GM12878 (cell line): ENCODE measurements at regions of chr19 and their contacts with region 1.

Region 1: GRCh38 chr19:46753420-46754155 is 7.3 kb upstream of the STRN4 start:
- DNase-seq: no peak
- ATAC-seq: peak; percentile 87
- H3K4me3 ChIP-seq: no peak overlapping the region
- H3K27ac ChIP-seq: no peak overlapping the region
- H3K4me1 ChIP-seq: no peaks in the 10 kb centered on the region
- H3K27me3 ChIP-seq: no peaks in the 10 kb centered on the region
- CTCF ChIP-seq: peak; percentile 73 to 76 (median 75)
- EP300 ChIP-seq: no peak
- POLR2A ChIP-seq: no peak
- RAD21 ChIP-seq: peak; percentile 58

Region 2: GRCh38 chr19:46503848-46504453 is 249.6 kb before region 1 on chr19:
- CTCF ChIA-PET with region 1: no interaction called
- POLR2A ChIA-PET with region 1: no interaction called
- RAD21 ChIA-PET with region 1: no interaction called
- SMC1A ChIA-PET with region 1: no interaction called
- in situ Hi-C with region 1: no loop called
- intact Hi-C with region 1: no loop called
- DNase-seq: no peak
- ATAC-seq: no peak
- H3K4me3 ChIP-seq: no peak overlapping the region
- H3K27ac ChIP-seq: no peak overlapping the region
- H3K4me1 ChIP-seq: no peaks in the 10 kb centered on the region; the same call in 1 of the 2 replicates
- H3K27me3 ChIP-seq: no peaks in the 10 kb centered on the region
- CTCF ChIP-seq: no peak
- EP300 ChIP-seq: no peak
- POLR2A ChIP-seq: no peak
- RAD21 ChIP-seq: no peak

Region 3: GRCh38 chr19:46529622-46530462 is 223.7 kb before region 1 on chr19:
- CTCF ChIA-PET with region 1: interaction called, 21 read pairs
- POLR2A ChIA-PET with region 1: no interaction called
- RAD21 ChIA-PET with region 1: interaction called, 6 read pairs
- SMC1A ChIA-PET with region 1: interaction called, 6 read pairs
- in situ Hi-C with region 1: no loop called
- intact Hi-C with region 1: loop called (anchors 5 kb)
- DNase-seq: no peak
- ATAC-seq: peak; percentile 86
- H3K4me3 ChIP-seq: no peak overlapping the region
- H3K27ac ChIP-seq: no peak overlapping the region
- H3K4me1 ChIP-seq: peaks cover 4% of the 10 kb centered on the region
- H3K27me3 ChIP-seq: no peaks in the 10 kb centered on the region; a peak in 1 of 4 replicates
- CTCF ChIP-seq: peak; percentile 87 to 94 (median 90)
- EP300 ChIP-seq: no peak
- POLR2A ChIP-seq: no peak
- RAD21 ChIP-seq: peak; percentile 94

Region 4: GRCh38 chr19:46766569-46767317 is 13.2 kb after region 1 on chr19:
- CTCF ChIA-PET with region 1: interaction called, 27 read pairs
- POLR2A ChIA-PET with region 1: interaction called, 8 read pairs
- RAD21 ChIA-PET with region 1: interaction called, 4 read pairs
- SMC1A ChIA-PET with region 1: interaction called, 10 read pairs
- in situ Hi-C with region 1: no loop called
- intact Hi-C with region 1: no loop called
- DNase-seq: no peak
- ATAC-seq: peak; percentile 99
- H3K4me3 ChIP-seq: no peak overlapping the region
- H3K27ac ChIP-seq: no peak overlapping the region
- H3K4me1 ChIP-seq: no peaks in the 10 kb centered on the region
- H3K27me3 ChIP-seq: no peaks in the 10 kb centered on the region
- CTCF ChIP-seq: peak; percentile 70 to 89 (median 86)
- EP300 ChIP-seq: no peak
- POLR2A ChIP-seq: no peak
- RAD21 ChIP-seq: peak; percentile 38; the same call in 1 of the 2 replicates

Region 5: GRCh38 chr19:46788262-46788967 is 34.8 kb after region 1 on chr19 and contains the start of gene SLC1A5:
- CTCF ChIA-PET with region 1: interaction called, 21 read pairs
- POLR2A ChIA-PET with region 1: interaction called, 3 read pairs
- RAD21 ChIA-PET with region 1: no interaction called
- SMC1A ChIA-PET with region 1: interaction called, 6 read pairs
- in situ Hi-C with region 1: no loop called
- intact Hi-C with region 1: no loop called
- DNase-seq: peak; percentile 86
- ATAC-seq: peak; percentile 81
- H3K4me3 ChIP-seq: peak within 1 kb of the TSS; percentile 100
- H3K27ac ChIP-seq: peak within 1 kb of the TSS; percentile 94
- H3K4me1 ChIP-seq: 0 out of 2 replicates have a peak, but pooled peaks cover 7% of the 10 kb centered on the region
- H3K27me3 ChIP-seq: no peaks in the 10 kb centered on the region; a peak in 1 of 4 replicates
- CTCF ChIP-seq: no peak
- EP300 ChIP-seq: no peak
- POLR2A ChIP-seq: peak; percentile 100
- RAD21 ChIP-seq: no peak
- polyA plus RNA-seq, gene SLC1A5: 9.1 to 16.3 TPM

Region 6: GRCh38 chr19:46821498-46822409 is 68.2 kb after region 1 on chr19:
- CTCF ChIA-PET with region 1: interaction called, 10 read pairs
- POLR2A ChIA-PET with region 1: no interaction called
- RAD21 ChIA-PET with region 1: interaction called, 14 read pairs
- SMC1A ChIA-PET with region 1: interaction called, 8 read pairs
- in situ Hi-C with region 1: no loop called
- intact Hi-C with region 1: no loop called
- DNase-seq: no peak
- ATAC-seq: peak; percentile 81
- H3K4me3 ChIP-seq: peak overlapping the region; percentile 33; the same call in 1 of the 2 replicates
- H3K27ac ChIP-seq: peak overlapping the region; percentile 51
- H3K4me1 ChIP-seq: peaks cover 27% of the 10 kb centered on the region
- H3K27me3 ChIP-seq: no peaks in the 10 kb centered on the region
- CTCF ChIP-seq: no peak
- EP300 ChIP-seq: no peak
- POLR2A ChIP-seq: peak; percentile 55
- RAD21 ChIP-seq: no peak

Region 7: GRCh38 chr19:46834121-46834520 is 80.5 kb after region 1 on chr19:
- CTCF ChIA-PET with region 1: interaction called, 134 read pairs
- POLR2A ChIA-PET with region 1: no interaction called
- RAD21 ChIA-PET with region 1: interaction called, 6 read pairs
- SMC1A ChIA-PET with region 1: interaction called, 3 read pairs
- in situ Hi-C with region 1: no loop called
- intact Hi-C with region 1: no loop called
- DNase-seq: no peak
- ATAC-seq: no peak
- H3K4me3 ChIP-seq: no peak overlapping the region
- H3K27ac ChIP-seq: no peak overlapping the region
- H3K4me1 ChIP-seq: no peaks in the 10 kb centered on the region
- H3K27me3 ChIP-seq: no peaks in the 10 kb centered on the region
- CTCF ChIP-seq: no peak
- EP300 ChIP-seq: no peak
- POLR2A ChIP-seq: no peak
- RAD21 ChIP-seq: no peak

Region 8: GRCh38 chr19:46990991-46991676 is 237.5 kb after region 1 on chr19:
- CTCF ChIA-PET with region 1: interaction called, 5 read pairs
- POLR2A ChIA-PET with region 1: no interaction called
- RAD21 ChIA-PET with region 1: interaction called, 5 read pairs
- SMC1A ChIA-PET with region 1: no interaction called
- in situ Hi-C with region 1: no loop called
- intact Hi-C with region 1: loop called (anchors 1 kb)
- DNase-seq: peak; percentile 21
- ATAC-seq: peak; percentile 83
- H3K4me3 ChIP-seq: no peak overlapping the region
- H3K27ac ChIP-seq: no peak overlapping the region; the same call in 1 of the 2 replicates
- H3K4me1 ChIP-seq: peaks cover 10% of the 10 kb centered on the region
- H3K27me3 ChIP-seq: no peaks in the 10 kb centered on the region
- CTCF ChIP-seq: peak; percentile 72 to 96 (median 77)
- EP300 ChIP-seq: no peak
- POLR2A ChIP-seq: no peak
- RAD21 ChIP-seq: peak; percentile 87